ENCODE measurements at regions of chr17 and their contacts with region 1.

Region 1: GRCh38 chr17:80323982-80324381 is 63.3 kb downstream of the RNF213 start:
- DNase-seq: no peak
- ATAC-seq: no peak
- H3K4me3 ChIP-seq: no peak overlapping the region
- H3K27ac ChIP-seq: no peak overlapping the region
- H3K4me1 ChIP-seq: no peaks in the 10 kb centered on the region
- H3K27me3 ChIP-seq: no peaks in the 10 kb centered on the region
- CTCF ChIP-seq: no peak

Region 2: GRCh38 chr17:80109713-80110446 is 214.1 kb before region 1 on chr17:
- CTCF ChIA-PET with region 1: no interaction called
- POLR2A ChIA-PET with region 1: no interaction called
- in situ Hi-C with region 1: no loop called
- intact Hi-C with region 1: no loop called
- DNase-seq: no peak
- ATAC-seq: no peak
- H3K4me3 ChIP-seq: no peak overlapping the region
- H3K27ac ChIP-seq: no peak overlapping the region
- H3K4me1 ChIP-seq: no peaks in the 10 kb centered on the region; the same call in 1 of the 2 replicates
- H3K27me3 ChIP-seq: no peaks in the 10 kb centered on the region
- CTCF ChIP-seq: no peak

Region 3: GRCh38 chr17:80372456-80372855 is 48.5 kb after region 1 on chr17:
- CTCF ChIA-PET with region 1: no interaction called
- POLR2A ChIA-PET with region 1: interaction called, 12 read pairs
- in situ Hi-C with region 1: no loop called
- intact Hi-C with region 1: no loop called
- DNase-seq: no peak
- ATAC-seq: no peak
- H3K4me3 ChIP-seq: no peak overlapping the region
- H3K27ac ChIP-seq: no peak overlapping the region
- H3K4me1 ChIP-seq: no peaks in the 10 kb centered on the region
- H3K27me3 ChIP-seq: no peaks in the 10 kb centered on the region
- CTCF ChIP-seq: no peak